Sciatic nerve (tissue), 2 donors: ENCODE measurements at regions of chr9 and their contacts with region 1.

Region 1: GRCh38 chr9:112355427-112355897 is 22.0 kb upstream of the PTBP3 start:
- DNase-seq: no peak
- ATAC-seq: no peak

Region 2: DNA sequence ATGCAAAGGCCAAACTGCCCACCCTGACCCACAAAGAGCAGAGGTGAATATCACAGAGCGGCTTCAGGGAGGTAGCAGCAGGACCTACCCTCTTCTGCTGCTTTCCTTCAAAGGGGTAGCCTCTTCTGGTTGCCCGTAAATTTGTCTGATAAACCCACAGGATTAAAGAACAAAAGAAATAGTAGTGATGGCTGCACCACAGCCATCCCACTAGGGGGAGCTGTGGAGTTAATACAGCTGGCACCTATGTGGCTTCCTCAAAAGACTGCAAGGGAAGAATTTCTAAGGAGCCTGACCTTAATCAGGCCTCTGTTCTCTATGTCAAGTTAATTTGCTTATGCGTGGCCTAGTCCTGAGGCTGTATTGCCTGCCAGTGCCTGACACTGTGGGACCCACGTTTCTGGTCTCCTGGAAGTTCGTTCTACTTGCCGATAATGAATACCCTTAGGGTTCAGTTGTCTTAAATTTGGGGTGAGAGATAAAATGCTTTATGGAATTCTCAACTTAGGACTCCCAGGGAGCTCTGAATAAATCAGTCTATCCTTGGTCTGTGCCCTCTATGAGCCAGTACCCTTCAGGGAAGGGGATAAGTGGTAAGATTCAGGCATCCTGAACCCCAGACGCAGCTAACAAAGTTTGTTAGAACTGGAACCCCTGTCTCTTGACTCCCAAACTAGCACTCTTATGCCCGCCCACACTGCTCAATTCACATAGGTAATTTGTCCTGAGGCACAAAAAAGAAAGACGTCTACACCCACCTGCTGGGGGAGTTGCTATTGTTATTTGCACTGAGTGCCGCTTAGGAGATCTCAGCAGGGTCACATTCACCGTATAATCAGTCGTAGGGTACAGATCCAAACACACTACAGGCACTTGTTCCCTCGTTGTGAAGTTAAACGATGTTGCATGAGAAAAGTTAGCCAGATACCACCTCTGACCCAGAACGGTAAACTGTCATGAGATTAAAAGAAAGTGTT is 257.5 kb before region 1 on chr9:
- intact Hi-C with region 1: loop called (anchors 10 kb)
- DNase-seq: peak; percentile 69
- ATAC-seq: peak; percentile 89